ENCODE measurements at regions of chr3 and their contacts with region 1.

Region 1: DNA sequence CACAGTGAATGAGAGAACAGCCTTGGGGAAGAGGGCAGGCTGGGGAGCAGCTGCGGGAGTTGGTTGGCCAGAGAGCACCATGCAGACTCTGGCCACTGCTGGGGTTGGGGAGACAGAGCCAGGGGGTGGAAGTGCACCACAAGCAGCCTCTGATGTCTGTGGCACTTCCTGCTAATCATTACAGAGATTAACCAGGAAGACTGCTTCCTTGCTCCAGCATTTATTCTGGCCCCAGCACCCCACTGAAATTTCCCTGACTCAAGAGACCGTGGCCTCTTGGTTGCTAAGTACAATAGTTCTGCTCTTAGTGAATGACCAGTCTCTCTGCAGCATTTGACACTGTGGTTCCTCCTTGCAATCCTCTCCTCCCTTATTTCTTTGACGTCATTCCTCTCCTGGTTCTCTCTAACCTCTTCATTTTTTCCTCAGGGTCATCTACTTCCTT is 266.2 kb upstream of the ROPN1 start:
- DNase-seq: no peak
- ATAC-seq: no peak

Region 2: DNA sequence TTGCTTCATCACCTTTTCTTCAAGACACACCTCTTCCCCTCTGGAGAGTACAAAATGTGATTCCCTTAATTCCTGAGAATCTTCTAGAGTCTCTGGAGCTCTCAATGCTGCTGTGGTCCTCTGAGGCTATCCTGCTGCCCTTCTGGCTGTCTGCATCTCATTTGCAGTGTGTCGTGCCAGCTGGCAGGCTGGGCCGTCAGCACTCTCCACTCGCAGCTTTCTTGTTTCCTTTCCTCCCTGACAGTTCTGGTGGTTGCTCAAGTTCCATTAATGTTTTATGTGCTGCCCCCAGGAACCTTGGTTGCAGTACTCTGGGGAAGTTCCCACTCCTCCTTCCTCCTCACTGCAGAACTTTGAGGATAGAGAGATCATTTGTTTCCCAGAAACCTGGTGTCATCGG is 55.3 kb before region 1 on chr3:
- intact Hi-C with region 1: loop called (anchors 10 kb)
- DNase-seq: peak; percentile 86
- ATAC-seq: peak; percentile 97

Region 3: GRCh38 chr3:124748560-124749203 is 490.6 kb after region 1 on chr3:
- intact Hi-C with region 1: no loop called
- DNase-seq: no peak
- ATAC-seq: peak; percentile 61

Region 4: GRCh38 chr3:124834723-124835718 is 576.9 kb after region 1 on chr3:
- intact Hi-C with region 1: no loop called
- DNase-seq: peak; percentile 59
- ATAC-seq: peak; percentile 36